AG04449 (cell line): ENCODE measurements at regions of chrX and their contacts with region 1.

Region 1: DNA sequence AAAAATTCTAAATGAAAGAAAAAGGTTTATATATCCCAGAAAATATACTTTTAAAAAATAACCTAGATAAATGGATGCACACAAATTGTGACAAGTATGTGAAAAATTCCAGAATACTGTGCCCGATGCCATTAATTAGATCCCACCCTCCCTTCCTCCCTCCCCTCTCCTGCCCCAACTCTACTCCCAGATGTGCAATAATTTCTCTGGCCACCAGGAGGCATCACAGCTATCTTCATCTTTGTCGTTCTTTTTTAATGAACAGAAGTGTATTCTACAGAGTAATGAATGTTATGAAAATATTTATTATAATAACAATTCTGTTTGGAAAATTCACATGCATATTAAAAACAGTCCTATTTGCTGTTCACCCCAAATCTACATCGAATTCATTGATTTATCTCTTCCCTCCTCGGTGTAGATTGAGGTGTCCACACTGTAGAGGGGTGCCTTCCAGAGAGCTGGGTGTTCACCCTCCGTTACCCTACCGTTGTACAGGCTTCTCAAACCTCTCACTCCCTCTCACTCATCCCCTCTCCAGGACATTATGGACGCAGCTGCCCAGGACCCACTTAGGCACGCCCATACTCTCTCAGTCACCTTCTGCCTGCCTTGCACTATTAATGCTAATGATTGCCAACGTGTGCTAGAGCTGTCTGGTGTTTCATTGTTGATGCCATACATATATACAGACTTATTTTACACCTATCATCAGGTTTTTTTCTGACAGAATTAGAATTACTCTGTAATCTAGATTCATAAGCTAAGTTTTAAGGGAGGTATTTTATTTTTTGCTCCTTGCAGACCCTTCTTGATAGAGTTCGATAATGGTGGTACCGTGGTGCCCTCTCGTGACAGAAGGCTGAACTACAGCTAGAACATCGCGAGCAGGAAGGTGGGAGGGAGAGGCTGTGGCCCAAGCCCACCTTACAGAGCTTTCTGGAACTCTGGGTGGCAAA is 14.1 kb downstream of the RAB40AL start:
- DNase-seq: no peak
- H3K4me3 ChIP-seq: peak overlapping the region; percentile 12; the same call in 1 of the 2 replicates
- CTCF ChIP-seq: peak; percentile 61

Region 2: DNA sequence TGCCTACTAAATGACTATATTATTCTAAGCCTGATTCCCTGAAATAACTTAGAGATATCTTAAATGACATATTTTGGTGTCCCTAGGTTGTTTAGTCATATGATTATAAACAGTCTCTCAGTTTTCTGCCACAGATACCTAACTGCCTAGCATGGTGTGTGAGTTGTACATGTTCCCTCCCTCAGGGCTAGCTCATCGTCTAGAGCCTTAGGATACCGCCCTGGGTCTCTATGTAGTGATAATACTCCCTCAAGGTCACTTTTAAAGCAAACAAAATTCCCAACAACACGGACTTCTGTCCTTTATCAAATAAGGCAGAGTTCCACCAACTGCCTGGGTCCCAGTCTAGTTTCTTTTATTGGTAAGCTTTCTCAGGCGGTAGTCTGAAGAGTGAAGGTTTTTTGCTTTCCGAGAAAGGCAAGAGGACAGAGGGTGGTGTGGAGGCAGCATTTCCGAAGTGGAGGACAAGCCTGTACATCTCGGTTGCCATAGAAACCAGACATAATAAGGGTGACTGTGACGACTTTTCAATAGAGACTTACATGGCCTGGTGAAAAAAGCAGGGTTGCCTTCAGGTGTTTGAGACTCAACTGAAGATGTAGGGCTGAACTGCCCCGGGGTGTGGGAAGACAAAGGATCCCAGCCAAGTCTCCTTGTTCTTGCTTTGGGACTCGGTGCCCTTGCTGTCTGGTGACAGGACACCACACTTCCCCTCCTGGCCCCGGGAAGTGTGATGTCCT is 67.8 kb before region 1 on chrX:
- CTCF ChIA-PET with region 1: no interaction called
- POLR2A ChIA-PET with region 1: no interaction called
- DNase-seq: no peak
- H3K4me3 ChIP-seq: no peak overlapping the region
- CTCF ChIP-seq: no peak

Region 3: GRCh38 chrX:102934624-102935023 is 16.6 kb before region 1 on chrX:
- CTCF ChIA-PET with region 1: interaction called, 35 read pairs
- POLR2A ChIA-PET with region 1: no interaction called
- DNase-seq: no peak
- H3K4me3 ChIP-seq: no peak overlapping the region
- CTCF ChIP-seq: peak; percentile 37

Region 4: GRCh38 chrX:102976793-102977495 is 25.8 kb after region 1 on chrX:
- CTCF ChIA-PET with region 1: interaction called, 18 read pairs
- POLR2A ChIA-PET with region 1: interaction called, 3 read pairs
- DNase-seq: peak; percentile 74
- H3K4me3 ChIP-seq: no peak overlapping the region
- CTCF ChIP-seq: no peak

Region 5: GRCh38 chrX:103002576-103002975 is 51.4 kb after region 1 on chrX:
- CTCF ChIA-PET with region 1: interaction called, 12 read pairs
- POLR2A ChIA-PET with region 1: no interaction called
- DNase-seq: no peak
- H3K4me3 ChIP-seq: no peak overlapping the region
- CTCF ChIP-seq: no peak

Region 6: DNA sequence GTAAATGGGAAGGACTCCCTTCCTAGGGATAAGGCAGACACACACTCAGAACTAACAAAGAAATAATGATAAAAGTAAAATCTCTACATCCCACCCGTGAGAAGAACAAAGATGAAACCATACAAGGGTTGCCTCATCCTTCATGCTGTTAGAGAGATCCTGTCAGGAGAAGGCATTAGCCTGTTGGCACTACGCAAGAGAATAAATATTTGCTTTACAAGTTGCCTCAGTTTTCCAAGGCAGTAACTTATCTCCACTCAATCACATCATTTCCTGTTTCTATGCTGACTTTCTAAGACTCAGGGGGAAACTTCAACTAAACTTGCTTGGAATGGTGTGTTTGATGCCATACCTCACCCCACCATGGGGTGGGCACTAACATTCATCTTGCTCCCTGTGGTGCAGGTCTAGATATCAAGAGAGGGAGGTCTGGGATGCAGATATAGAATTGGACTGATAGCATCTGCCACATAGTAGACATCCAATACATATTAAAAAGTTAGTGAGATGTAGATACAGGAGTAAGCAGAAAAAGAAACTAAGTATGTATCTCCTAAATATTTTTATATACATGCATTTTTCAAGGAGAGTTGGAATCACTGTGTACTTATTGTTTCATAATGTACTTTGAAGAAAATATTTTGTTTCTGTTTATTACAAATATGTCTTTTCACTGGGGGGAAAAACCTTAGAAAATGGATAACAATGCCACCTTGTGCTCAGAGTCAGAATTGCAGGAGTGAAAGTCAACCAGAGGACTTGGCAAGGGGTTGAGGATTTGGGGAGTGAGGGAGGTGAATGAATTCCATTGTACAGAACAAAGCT is 206.5 kb after region 1 on chrX:
- CTCF ChIA-PET with region 1: interaction called, 15 read pairs
- POLR2A ChIA-PET with region 1: no interaction called
- DNase-seq: no peak
- H3K4me3 ChIP-seq: no peak overlapping the region
- CTCF ChIP-seq: peak; percentile 34

Region 7: GRCh38 chrX:103175944-103176753 is 225.0 kb after region 1 on chrX:
- CTCF ChIA-PET with region 1: interaction called, 73 read pairs
- POLR2A ChIA-PET with region 1: no interaction called
- DNase-seq: no peak
- H3K4me3 ChIP-seq: peak overlapping the region; percentile 25
- CTCF ChIP-seq: peak; percentile 60